OCI-LY7 (cell line): ENCODE measurements at regions of chr4 and their contacts with region 1.

Region 1: GRCh38 chr4:26410385-26411293 is 79.6 kb downstream of the CCKAR start:
- DNase-seq: peak; percentile 65
- H3K4me3 ChIP-seq: no peak overlapping the region
- H3K27ac ChIP-seq: no peak overlapping the region
- H3K4me1 ChIP-seq: peaks cover 7% of the 10 kb centered on the region
- CTCF ChIP-seq: peak; percentile 93

Region 2: DNA sequence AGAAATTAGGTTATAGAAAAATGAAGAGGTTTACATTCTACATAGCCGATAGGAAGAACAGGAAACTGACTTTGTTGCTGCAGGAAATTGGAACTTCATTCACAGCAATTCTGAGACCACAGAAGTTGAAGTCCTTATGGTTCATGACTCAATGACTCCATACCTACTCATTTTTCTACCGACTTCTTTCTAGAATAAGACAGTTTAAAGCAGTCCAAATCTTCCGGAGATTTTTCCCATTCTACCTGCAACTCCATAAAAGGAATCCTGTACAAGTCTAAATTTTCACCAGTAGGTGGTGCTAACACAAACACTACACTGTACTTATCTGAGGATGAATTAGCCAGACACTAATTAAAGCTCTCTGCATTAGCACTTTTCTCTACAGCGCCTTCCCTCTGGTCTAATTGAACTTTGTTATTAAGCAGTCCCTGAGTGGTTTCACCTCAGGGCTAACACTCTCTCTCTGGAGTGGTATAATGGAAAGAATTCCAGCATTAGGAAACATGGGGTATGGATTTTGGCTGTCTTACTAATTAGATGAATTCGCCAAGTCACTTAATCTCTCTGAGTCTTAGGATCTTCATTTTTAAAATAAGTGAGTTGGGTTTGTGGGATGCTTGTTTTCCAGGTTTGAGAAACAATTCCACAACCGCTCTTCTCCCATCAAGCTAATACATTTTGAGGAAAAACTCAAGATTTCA is 328.7 kb before region 1 on chr4:
- CTCF ChIA-PET with region 1: no interaction called
- POLR2A ChIA-PET with region 1: interaction called, 3 read pairs
- intact Hi-C with region 1: loop called (anchors 1 kb)
- DNase-seq: peak; percentile 68
- H3K4me3 ChIP-seq: no peak overlapping the region
- H3K27ac ChIP-seq: no peak overlapping the region
- H3K4me1 ChIP-seq: no peaks in the 10 kb centered on the region
- CTCF ChIP-seq: peak; percentile 94

Region 3: DNA sequence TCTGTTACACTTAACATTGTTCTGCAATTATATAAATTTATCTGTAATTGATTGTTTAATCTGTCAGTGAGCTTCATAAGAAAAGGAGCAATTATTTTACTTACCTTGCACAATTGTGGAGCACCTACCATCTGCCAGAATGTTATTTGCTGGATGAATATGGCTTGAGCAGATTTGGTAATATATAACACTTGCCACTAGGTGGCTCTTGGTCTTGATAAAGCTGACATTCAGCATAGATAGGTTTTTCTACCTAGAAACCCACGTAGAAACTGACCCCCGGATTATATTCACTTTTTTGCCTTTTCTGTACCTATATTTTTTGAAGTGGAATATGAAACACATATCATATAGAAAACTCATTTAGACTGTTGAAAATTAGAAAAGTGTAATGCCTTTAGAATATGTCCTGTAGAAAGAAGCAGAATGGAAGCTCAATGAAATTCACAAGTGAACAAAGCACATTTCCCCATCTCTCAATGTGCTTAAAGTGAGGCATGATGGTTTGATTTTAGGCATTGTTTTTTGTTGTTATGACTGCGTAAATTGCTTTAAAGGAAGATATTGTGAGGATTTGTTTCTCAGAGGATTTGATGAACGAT is 80.4 kb before region 1 on chr4:
- CTCF ChIA-PET with region 1: interaction called, 5 read pairs
- POLR2A ChIA-PET with region 1: interaction called, 5 read pairs
- intact Hi-C with region 1: loop called (anchors 1 kb)
- DNase-seq: peak; percentile 77
- H3K4me3 ChIP-seq: no peak overlapping the region
- H3K27ac ChIP-seq: no peak overlapping the region
- H3K4me1 ChIP-seq: peaks cover 4% of the 10 kb centered on the region
- CTCF ChIP-seq: peak; percentile 93